ENCODE measurements at regions of chr17 and their contacts with region 1.

Region 1: DNA sequence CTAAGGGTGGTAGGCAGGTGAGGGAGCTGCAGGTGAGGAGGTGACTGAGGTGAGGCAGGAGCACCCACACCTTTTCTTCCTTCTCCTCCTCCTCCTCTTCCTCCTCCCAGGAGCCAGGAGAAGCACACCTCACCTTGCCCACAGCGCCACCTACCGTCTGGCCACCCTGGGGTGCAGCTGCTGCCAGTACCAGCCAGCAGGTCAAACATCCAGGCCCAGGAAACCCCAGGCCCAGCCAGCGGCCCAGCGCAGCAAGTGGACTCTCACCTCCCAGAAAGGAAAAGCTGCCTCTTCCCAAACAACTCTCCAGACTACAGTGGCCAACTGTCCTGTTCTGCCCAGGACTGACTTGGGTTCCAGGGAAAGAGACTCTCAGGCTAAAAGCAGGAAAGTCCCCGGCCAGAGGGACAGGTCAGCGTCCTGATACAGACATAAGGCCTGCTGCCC is 22.7 kb downstream of the PEMT start:
- DNase-seq: peak; percentile 49 to 90 (median 81)

Region 2: DNA sequence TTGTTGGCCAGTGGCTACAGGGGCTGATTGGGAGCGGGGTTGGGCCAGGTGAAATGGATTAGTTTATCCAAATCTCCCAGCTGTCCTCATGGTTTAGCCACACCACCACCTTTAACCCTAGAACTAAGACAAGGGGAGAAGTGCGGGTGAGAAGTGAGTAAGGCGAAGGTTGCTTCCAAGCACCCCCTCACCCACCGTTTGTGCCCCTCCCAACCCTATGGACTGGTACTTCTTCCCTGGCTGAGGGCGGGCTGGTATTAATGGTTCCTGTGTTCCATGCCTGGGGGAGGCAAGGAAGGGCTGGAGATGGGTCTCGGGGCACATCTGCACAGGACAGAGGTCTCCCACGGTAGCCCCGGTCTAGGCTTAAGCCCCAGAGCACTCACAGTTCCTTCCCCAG is 240.5 kb before region 1 on chr17:
- intact Hi-C with region 1: no loop called
- DNase-seq: no peak

Region 3: DNA sequence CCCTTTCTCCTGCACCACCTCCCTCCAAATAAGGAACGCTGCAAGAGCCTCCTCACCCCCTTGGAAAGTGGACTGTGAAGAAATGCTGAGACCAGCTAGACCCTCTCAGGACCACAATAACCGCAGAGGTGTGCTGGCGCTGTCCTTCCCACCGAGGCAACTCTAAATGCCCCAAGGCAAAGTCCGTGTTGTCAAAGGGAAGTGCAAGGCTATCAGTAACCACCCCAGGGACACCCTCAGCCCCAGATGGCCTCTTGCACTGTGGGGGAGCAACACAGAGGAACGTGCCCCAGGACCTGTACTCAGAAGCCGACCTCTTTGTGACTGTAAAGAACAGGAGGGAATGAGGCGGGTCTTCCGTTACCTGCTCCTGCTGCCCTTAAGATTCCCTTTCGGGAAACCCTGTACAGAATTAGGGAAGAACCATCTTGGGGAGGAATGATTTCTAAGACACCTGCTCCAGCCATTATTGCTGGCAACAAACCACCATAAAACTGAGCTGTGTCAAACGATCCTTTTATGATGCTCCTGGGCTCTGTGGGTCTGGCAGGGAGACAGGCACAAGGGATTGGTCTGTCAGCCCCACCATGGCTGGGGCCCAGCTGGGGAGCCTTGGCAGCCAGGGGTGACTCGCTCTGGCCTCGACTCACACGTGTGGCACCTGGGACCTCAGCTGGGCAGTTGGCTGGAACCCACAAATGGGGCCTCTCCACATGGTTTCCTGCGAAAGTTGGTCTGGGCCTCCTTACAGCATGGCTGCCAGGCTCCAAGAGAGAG is 106.5 kb before region 1 on chr17:
- intact Hi-C with region 1: no loop called
- DNase-seq: no peak

Region 4: GRCh38 chr17:17496189-17497064 is 72.3 kb before region 1 on chr17 and contains the start of gene RASD1:
- intact Hi-C with region 1: loop called (anchors 5 kb)
- DNase-seq: peak; percentile 83 to 98 (median 95)

Region 5: GRCh38 chr17:17613708-17614114 is 44.9 kb after region 1 on chr17:
- intact Hi-C with region 1: no loop called
- DNase-seq: peak in 28 of 42 donors; percentile 16 to 81 (median 44)